Lower leg skin (tissue), 4 donors: ENCODE measurements at regions of chr10 and their contacts with region 1.

Region 1: DNA sequence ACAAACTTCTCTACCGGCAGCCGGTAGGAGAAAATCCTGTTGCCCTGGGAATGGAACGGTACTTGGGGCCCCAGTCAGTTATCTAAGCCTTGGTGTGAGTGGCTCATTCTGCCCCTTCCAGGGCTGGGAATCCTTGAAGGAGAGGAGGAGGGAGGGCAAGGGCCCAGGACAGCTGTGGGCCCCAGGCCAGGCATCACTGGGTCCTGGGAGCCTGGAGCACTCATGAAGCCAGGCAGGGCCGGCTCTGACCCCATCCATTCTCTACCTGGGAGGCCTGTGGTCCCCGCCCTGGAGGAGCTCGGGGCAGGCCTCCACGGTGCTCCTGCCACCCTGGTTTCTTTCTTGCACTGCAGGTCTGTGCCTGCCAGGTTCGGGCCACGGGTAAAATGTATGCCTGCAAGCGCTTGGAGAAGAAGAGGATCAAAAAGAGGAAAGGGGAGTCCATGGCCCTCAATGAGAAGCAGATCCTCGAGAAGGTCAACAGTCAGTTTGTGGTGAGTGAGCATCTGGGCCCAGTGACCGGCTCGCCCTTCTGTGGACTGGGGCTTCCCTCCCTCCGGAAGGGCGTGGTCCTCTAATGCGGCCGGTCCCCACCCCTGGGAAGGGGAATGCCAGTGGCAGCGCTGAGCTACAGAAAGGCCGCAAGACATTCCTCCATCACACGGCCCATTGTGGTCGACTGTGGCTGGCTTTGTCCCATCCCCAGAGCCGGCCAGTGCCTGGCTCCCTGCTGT is 111.3 kb downstream of the RGS10 start:
- DNase-seq: no peak
- H3K4me3 ChIP-seq: no peak overlapping the region
- CTCF ChIP-seq: no peak
- POLR2A ChIP-seq: no peak

Region 2: GRCh38 chr10:118901380-118901779 is 529.8 kb before region 1 on chr10:
- intact Hi-C with region 1: no loop called
- DNase-seq: no peak
- H3K4me3 ChIP-seq: no peak overlapping the region
- CTCF ChIP-seq: no peak
- POLR2A ChIP-seq: no peak

Region 3: GRCh38 chr10:119395280-119395989 is 35.8 kb before region 1 on chr10:
- intact Hi-C with region 1: no loop called
- DNase-seq: no peak
- H3K4me3 ChIP-seq: no peak overlapping the region
- CTCF ChIP-seq: no peak
- POLR2A ChIP-seq: no peak

Region 4: DNA sequence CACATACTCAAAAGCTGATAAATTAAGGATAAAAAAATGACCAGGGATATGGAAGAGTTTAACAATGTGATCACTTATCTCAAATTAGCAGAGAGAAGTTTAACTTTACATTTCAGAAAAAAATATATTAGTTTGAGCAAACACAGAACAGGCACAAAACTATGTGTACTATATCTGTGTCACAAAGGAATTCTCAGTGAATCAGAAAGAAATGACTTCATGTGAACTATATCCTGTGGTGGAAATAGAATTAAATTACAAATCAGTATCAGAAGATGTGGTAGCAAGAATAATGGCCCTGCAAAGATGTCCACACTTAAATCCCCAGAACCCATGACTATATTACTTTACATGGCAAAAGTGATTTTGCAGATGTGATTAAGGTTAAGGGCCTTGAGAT is 531.6 kb after region 1 on chr10:
- intact Hi-C with region 1: no loop called
- DNase-seq: no peak
- H3K4me3 ChIP-seq: no peak overlapping the region
- CTCF ChIP-seq: no peak
- POLR2A ChIP-seq: no peak

Region 5: GRCh38 chr10:120360571-120360970 is 929.4 kb after region 1 on chr10:
- intact Hi-C with region 1: loop called (anchors 5 kb)
- DNase-seq: no peak
- H3K4me3 ChIP-seq: no peak overlapping the region
- CTCF ChIP-seq: no peak
- POLR2A ChIP-seq: no peak